Heart right ventricle (tissue), 16 donors: ENCODE measurements at regions of chr10 and their contacts with region 1.

Region 1: GRCh38 chr10:88990384-88991160 is at the start of gene FAS:
- DNase-seq: peak; percentile 67 to 81
- ATAC-seq: peak; percentile 68 to 90 (median 74)
- H3K4me3 ChIP-seq: peak within 1 kb of the TSS; percentile 53 to 90 (median 83)
- H3K27ac ChIP-seq: peak within 1 kb of the TSS; percentile 86 to 97 (median 96)
- H3K4me1 ChIP-seq: peaks cover 0 to 80% (median 34%) of the 10 kb centered on the region in 9 donors
- H3K27me3 ChIP-seq: no peaks in the 10 kb centered on the region
- CTCF ChIP-seq: no peak
- total RNA-seq, gene FAS: 2.5 to 10.1 (median 3.7) TPM

Region 2: DNA sequence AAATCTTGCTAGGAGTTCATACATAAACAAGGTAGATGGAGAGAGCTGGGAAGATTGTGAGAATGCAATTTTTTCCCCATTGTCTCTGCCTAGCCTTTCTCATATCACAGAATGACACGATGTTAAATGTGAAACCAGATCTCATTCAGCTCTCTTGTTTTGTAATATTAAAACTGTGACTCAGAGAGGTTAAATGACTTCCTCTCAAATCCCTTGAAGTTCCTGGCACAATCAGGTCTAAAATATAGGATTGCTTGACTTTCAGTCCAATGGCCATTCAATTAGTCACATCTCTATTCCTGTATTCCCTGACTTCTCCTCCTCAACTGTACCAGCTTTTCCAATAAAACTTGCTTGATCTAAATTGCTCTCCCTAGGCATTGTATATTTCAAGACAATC is 142.1 kb before region 1 on chr10:
- intact Hi-C with region 1: loop called in 1 of 10 experiments (anchors 10 kb)
- DNase-seq: no peak
- ATAC-seq: peak in 1 of 8 donors; percentile 60
- H3K4me3 ChIP-seq: peak overlapping the region in 1 of 10 donors; percentile 23
- H3K27ac ChIP-seq: peak overlapping the region in 1 of 10 donors; percentile 16
- H3K4me1 ChIP-seq: peaks cover 0 to 56% (median 5%) of the 10 kb centered on the region in 9 donors
- H3K27me3 ChIP-seq: peaks cover 0 to 4% (median 0%) of the 10 kb centered on the region in 7 donors
- CTCF ChIP-seq: no peak

Region 3: DNA sequence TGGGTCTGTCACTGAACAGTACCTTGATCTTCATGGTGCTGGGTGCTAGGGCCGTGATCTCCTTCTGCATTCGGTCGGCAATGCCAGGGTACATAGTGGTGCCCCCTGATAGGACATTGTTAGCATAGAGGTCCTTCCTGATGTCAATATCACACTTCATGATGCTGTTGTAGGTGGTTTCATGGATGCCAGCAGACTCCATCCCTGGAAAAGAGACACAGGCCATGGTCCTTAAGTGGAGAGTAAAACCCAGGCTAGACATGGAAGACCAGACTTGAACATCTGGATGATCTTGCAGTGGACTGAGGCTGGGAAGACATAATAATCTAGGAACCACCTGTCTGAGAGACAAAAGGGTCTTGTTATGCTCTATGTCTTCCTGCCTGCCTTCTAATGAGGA is 52.5 kb before region 1 on chr10:
- intact Hi-C with region 1: loop called (anchors 1 to 5 kb)
- DNase-seq: no peak
- ATAC-seq: no peak
- H3K4me3 ChIP-seq: no peak overlapping the region
- H3K27ac ChIP-seq: peak overlapping the region in 1 of 10 donors; percentile 24
- H3K4me1 ChIP-seq: peaks cover 3 to 12% (median 10%) of the 10 kb centered on the region in 9 donors
- H3K27me3 ChIP-seq: no peaks in the 10 kb centered on the region
- CTCF ChIP-seq: no peak